Posterior vena cava (tissue), 2 donors: ENCODE measurements at regions of chr7 and their contacts with region 1.

Region 1: GRCh38 chr7:142782922-142783900 is 12.4 kb downstream of the PRSS2 start:
- DNase-seq: peak; percentile 95

Region 2: GRCh38 chr7:142632291-142633134 is 150.7 kb before region 1 on chr7:
- intact Hi-C with region 1: loop called in 1 of 2 experiments (anchors 10 kb)
- DNase-seq: no peak

Region 3: DNA sequence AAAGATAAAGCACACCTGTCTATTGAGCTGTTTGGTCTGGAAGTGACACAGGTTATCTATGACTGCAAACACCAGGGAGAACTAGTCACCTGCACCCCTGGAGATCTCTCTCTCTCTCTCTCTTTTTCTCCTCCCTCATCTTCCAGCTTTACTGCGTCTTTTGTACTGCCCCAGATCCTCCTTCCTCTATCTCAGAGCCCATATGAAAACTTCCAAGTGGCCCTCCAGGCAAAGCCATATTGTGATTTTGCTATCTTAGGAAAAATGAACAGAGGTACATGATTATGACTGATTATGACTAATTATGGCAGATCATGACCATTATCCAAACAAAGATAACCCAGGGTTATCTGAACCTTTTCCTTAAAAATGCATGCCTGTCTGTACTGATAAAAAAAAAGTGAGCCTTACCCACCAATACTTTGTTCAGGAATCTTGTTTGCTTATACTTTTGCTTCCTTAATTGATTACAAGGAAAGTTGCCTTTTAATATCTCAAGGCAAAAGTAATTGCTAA is 59.1 kb after region 1 on chr7:
- intact Hi-C with region 1: no loop called
- DNase-seq: no peak

Region 4: DNA sequence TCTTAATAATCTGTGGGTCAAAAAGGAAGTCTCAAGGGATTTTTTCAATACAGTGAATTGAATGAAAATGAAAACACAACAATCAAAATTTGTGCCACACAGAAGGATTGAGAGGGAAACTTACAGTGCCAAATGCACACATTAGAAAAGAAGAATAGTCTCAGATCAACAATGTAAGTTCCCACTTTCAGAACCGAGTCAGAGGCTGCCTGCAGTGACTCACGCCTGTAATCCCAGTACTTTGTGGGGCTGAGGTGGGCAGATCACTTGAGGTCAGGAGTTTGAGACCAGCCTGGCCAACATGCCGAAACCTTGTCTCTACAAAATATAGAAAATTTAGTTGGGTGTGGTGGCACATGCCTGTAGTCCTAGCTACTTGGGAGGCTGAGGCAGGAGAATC is 191.4 kb after region 1 on chr7:
- intact Hi-C with region 1: no loop called
- DNase-seq: no peak

Region 5: GRCh38 chr7:143003393-143004051 is 220.3 kb after region 1 on chr7:
- intact Hi-C with region 1: no loop called
- DNase-seq: no peak